ENCODE measurements at regions of chr6 and their contacts with region 1.

Region 1: GRCh38 chr6:81878479-81878878 is 126.0 kb upstream of the TENT5A start:
- DNase-seq: no peak
- H3K4me3 ChIP-seq: no peak overlapping the region
- H3K27ac ChIP-seq: no peak overlapping the region
- H3K4me1 ChIP-seq: no peaks in the 10 kb centered on the region
- H3K27me3 ChIP-seq: no peaks in the 10 kb centered on the region
- CTCF ChIP-seq: no peak
- POLR2A ChIP-seq: no peak

Region 2: GRCh38 chr6:81865712-81866111 is 12.8 kb before region 1 on chr6:
- intact Hi-C with region 1: no loop called
- DNase-seq: no peak
- H3K4me3 ChIP-seq: no peak overlapping the region
- H3K27ac ChIP-seq: no peak overlapping the region
- H3K4me1 ChIP-seq: no peaks in the 10 kb centered on the region
- H3K27me3 ChIP-seq: no peaks in the 10 kb centered on the region
- CTCF ChIP-seq: no peak
- POLR2A ChIP-seq: no peak

Region 3: GRCh38 chr6:81906709-81907204 is 28.3 kb after region 1 on chr6:
- intact Hi-C with region 1: loop called (anchors 1 kb)
- DNase-seq: no peak
- H3K4me3 ChIP-seq: no peak overlapping the region
- H3K27ac ChIP-seq: no peak overlapping the region
- H3K4me1 ChIP-seq: no peaks in the 10 kb centered on the region
- H3K27me3 ChIP-seq: no peaks in the 10 kb centered on the region
- CTCF ChIP-seq: no peak
- POLR2A ChIP-seq: no peak

Measured in breast epithelium (tissue), 4 donors.